Right ventricle myocardium inferior (tissue), 1 donor: ENCODE measurements at regions of chr20 and their contacts with region 1.

Region 1: GRCh38 chr20:43840382-43841070 is 74.1 kb upstream of the TOX2 start:
- DNase-seq: no peak
- ATAC-seq: no peak

Region 2: DNA sequence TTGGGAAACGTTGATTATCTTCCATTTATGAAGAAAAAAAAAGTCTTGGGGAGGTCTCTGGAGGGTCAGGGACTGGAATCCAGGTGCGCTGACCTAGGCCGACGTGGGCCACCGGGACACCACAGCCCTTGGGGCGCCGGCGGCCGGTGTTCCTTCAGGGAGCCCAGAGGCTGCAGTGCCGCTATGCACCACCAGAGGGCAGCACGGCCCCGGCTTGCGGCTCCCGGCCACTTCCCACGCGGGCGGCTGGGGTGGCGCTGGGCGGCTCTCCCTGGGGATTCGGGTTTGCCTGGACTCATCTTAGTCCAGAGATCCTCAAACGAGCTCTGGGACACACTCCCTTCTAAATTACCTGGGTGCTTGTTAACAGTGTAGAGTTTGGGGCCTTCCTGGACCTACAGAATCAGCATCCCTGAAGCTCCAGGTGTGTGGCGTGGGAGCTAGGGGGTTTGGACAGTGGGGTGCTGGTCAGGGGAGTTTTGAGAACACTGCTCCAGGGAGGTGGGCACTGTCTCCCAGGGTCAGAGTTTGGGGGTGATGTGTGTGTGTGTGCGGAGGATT is 90.7 kb before region 1 on chr20:
- intact Hi-C with region 1: loop called (anchors 5 kb)
- DNase-seq: peak; percentile 94
- ATAC-seq: peak; percentile 89